ENCODE measurements at regions of chr16 and their contacts with region 1.

Region 1: DNA sequence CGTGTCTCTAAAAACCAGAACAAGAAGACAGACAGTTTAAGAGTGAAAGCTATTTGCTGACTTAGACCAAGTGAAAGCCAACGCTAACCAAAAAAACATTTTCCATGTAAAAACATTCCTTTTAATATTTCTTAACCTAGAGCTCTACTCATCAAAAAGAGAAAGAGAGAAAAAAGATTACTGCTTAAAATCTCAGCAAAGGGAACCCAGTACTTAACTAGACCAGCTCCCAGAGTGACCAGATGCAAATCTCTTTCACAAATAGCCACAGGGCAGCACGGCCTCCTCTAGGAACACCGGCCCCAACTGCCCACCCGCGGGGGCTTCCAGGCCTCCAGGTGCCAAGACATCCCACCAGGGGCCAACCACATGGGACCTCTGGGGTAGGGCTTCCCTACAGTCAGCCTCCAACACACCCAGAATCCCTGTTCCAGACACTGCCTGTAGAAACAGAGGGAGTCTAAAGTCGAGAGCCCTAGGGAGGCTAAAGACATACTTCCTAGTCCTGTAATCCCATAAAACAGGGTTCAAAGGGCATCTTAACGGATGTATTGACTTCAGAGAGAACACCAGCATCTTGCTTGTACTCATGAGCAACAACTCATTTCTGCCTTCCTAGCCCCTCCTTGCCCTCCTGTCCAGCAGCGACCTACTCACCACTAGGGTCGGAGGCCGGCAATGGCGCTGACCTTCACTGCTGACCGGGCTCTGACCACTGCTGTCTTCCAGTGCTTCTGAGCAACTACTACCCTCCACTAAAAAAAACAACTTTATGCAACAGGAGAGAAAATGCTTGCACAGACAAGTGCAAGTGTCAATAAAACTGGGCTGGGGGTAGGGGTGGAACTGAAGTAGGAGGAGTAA is 21.3 kb downstream of the ZCCHC14 start:
- DNase-seq: no peak
- ATAC-seq: peak; percentile 35
- H3K4me3 ChIP-seq: no peak overlapping the region
- H3K27ac ChIP-seq: no peak overlapping the region
- H3K4me1 ChIP-seq: peaks cover 0 to 4% of the 10 kb centered on the region in 2 donors
- H3K27me3 ChIP-seq: no peaks in the 10 kb centered on the region

Region 2: GRCh38 chr16:87435372-87436224 is 35.9 kb before region 1 on chr16:
- intact Hi-C with region 1: loop called in 1 of 2 experiments (anchors 5 kb)
- DNase-seq: peak in 1 of 2 donors; percentile 69
- ATAC-seq: peak; percentile 31
- H3K4me3 ChIP-seq: no peak overlapping the region
- H3K27ac ChIP-seq: no peak overlapping the region
- H3K4me1 ChIP-seq: no peaks in the 10 kb centered on the region
- H3K27me3 ChIP-seq: no peaks in the 10 kb centered on the region